WTC11 (cell line): ENCODE measurements at regions of chr19 and their contacts with region 1.

Region 1: DNA sequence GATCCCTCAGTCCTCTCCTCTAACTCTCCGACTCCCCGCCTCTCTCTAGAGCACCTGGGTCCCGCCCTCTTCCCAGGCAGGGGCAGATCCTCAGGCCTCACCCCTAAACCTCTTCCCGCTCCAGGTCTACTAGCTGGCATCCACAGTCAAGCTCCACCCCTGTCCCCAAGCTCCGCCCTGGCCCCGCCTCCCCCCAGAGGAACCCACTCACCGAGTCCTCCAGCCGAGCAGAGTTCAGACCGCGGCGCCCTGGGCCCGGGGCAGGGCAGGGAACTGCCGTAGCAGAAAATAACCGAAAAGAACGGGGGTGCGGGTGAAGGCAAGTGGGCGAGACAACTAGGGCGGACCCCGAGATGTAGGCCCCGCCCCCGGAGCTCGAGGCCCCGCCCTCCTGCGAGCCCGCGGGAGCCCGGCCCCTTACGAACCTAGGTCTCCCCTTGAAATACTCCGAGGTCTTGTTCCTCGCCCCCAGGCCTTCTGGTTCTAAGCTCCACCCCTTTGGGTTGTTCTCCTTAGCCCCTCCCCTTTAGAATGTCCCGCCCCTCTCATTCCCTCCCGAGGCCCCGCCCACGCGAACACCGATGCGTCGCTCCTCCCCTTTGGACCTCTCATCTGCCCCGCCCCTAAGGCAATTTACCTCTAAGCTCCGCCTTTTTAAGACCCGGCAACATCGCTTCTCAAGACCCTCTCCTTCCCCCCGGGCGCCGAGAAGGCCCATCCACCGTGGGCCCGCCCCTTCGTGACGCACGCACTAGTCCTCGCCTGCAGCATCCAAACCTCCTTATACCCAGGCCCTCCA is at the start of gene GGN:
- DNase-seq: peak; percentile 98
- ATAC-seq: peak; percentile 77
- H3K4me3 Mint-ChIP-seq: peak within 1 kb of the TSS; percentile 85
- H3K27ac Mint-ChIP-seq: peak within 1 kb of the TSS; percentile 97
- H3K4me1 Mint-ChIP-seq: peaks cover 28% of the 10 kb centered on the region
- H3K27me3 Mint-ChIP-seq: peaks cover 3% of the 10 kb centered on the region; the same call in 1 of the 2 replicates
- CTCF ChIP-seq: no peak
- total RNA-seq, gene GGN: 2.4 to 3.1 TPM (median 2.7 TPM) in 3 replicates

Region 2: GRCh38 chr19:38224014-38224862 is 163.5 kb before region 1 on chr19 and contains the start of gene DPF1:
- CTCF ChIA-PET with region 1: interaction called, 13 read pairs
- POLR2A ChIA-PET with region 1: no interaction called
- DNase-seq: peak; percentile 92
- ATAC-seq: peak; percentile 83
- H3K4me3 Mint-ChIP-seq: peak within 1 kb of the TSS; percentile 80
- H3K27ac Mint-ChIP-seq: peak within 1 kb of the TSS; percentile 50
- H3K4me1 Mint-ChIP-seq: peaks cover 25% of the 10 kb centered on the region
- H3K27me3 Mint-ChIP-seq: peaks cover 15% of the 10 kb centered on the region
- CTCF ChIP-seq: no peak
- total RNA-seq, gene DPF1: 5.2 to 6.8 TPM (median 5.9 TPM) in 3 replicates

Region 3: DNA sequence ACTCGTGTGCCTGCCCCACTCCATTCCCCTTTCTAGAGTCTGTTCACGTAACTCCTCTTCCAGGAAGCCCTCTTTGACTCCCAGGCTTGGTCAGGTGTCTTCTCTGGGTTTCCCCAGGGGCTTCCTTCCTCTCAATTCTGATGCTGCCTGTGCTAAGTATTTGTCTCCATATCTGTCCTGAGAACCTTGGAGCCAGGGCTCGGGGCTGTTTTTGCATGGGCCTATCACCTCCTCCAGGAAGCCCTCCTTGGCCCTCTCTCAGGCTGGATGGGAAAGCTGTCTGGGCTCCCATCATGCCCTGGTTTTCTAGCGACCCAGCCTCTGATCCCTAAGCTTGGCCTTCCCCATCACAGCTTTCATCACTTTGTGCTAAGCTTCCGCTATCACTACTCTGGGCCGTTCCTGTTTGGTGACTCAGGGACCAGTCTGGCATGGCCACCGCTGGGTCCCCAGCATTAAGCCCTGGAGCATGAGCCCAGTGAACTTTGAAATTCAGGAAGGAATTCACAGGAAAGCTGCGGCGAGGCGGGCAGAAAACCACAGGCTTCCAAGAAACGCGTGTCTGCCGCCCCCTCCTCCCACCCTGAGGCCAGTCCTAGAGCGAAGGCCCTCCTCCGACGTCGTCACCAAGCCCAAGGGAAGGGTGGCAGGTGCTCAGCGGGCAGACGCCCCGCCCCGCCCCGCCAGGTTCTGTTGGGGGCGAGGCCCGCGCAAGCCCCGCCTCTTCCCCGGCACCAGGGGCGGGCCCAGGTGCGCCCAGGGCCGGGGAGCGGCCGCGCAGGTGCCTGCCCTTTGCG is 123.9 kb before region 1 on chr19:
- CTCF ChIA-PET with region 1: interaction called, 13 read pairs
- POLR2A ChIA-PET with region 1: interaction called, 3 read pairs
- DNase-seq: peak; percentile 97
- ATAC-seq: peak; percentile 89
- H3K4me3 Mint-ChIP-seq: peak overlapping the region; percentile 63
- H3K27ac Mint-ChIP-seq: peak overlapping the region; percentile 97
- H3K4me1 Mint-ChIP-seq: peaks cover 51% of the 10 kb centered on the region
- H3K27me3 Mint-ChIP-seq: no peaks in the 10 kb centered on the region
- CTCF ChIP-seq: no peak

Region 4: DNA sequence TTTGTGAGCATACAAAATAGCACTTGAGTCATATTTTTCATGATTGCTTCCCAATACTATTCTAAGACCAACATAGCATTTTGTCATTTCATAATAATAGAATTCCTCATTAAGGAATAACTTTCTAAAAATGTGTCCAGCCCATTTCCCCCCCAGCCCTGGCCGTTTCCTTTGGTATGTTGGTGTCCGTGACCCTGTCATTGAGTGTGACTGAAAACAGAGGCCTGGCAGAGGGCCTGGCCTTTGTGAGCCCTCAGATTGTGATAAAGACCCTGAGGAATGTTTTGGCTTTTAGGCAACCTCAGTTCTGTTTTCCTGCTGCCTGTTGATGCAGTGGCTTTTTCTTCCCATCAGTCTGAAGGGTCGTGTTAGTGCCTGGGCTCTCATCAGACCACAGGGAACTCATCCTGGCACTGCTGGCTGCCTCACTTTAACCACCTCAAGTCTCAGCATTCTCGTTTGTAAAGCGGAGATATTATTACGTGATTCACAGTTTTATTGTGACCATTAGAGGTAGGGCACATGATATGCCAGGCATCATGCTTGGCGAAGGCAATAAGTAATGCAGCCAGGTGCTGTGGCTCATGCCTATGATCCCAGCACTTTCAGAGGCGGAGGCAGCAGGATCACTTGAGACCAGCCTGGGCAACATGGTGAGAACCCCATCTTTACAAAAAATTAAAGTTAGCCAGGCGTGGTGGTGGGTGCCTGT is 109.6 kb before region 1 on chr19:
- CTCF ChIA-PET with region 1: no interaction called
- POLR2A ChIA-PET with region 1: no interaction called
- DNase-seq: no peak
- ATAC-seq: no peak
- H3K4me3 Mint-ChIP-seq: no peak overlapping the region
- H3K27ac Mint-ChIP-seq: peak overlapping the region; percentile 49; the same call in 1 of the 2 replicates
- H3K4me1 Mint-ChIP-seq: peaks cover 10% of the 10 kb centered on the region; the same call in 1 of the 2 replicates
- H3K27me3 Mint-ChIP-seq: no peaks in the 10 kb centered on the region
- CTCF ChIP-seq: no peak

Region 5: GRCh38 chr19:38298821-38299567 is 88.8 kb before region 1 on chr19:
- CTCF ChIA-PET with region 1: no interaction called
- POLR2A ChIA-PET with region 1: no interaction called
- DNase-seq: no peak
- ATAC-seq: no peak
- H3K4me3 Mint-ChIP-seq: no peak overlapping the region
- H3K27ac Mint-ChIP-seq: no peak overlapping the region
- H3K4me1 Mint-ChIP-seq: peaks cover 18% of the 10 kb centered on the region
- H3K27me3 Mint-ChIP-seq: peaks cover 4% of the 10 kb centered on the region
- CTCF ChIP-seq: no peak

Region 6: GRCh38 chr19:38374429-38375176 is 13.1 kb before region 1 on chr19 and contains the start of gene PSMD8:
- CTCF ChIA-PET with region 1: interaction called, 94 read pairs
- POLR2A ChIA-PET with region 1: interaction called, 27 read pairs
- DNase-seq: peak; percentile 99
- ATAC-seq: peak; percentile 99
- H3K4me3 Mint-ChIP-seq: peak within 1 kb of the TSS; percentile 100
- H3K27ac Mint-ChIP-seq: peak within 1 kb of the TSS; percentile 75
- H3K4me1 Mint-ChIP-seq: peaks cover 14% of the 10 kb centered on the region
- H3K27me3 Mint-ChIP-seq: peaks cover 25% of the 10 kb centered on the region
- CTCF ChIP-seq: no peak
- total RNA-seq, gene PSMD8: 156 to 167 TPM (median 160 TPM) in 3 replicates

Region 7: GRCh38 chr19:38527466-38528136 is 139.9 kb after region 1 on chr19:
- CTCF ChIA-PET with region 1: no interaction called
- POLR2A ChIA-PET with region 1: no interaction called
- DNase-seq: peak; percentile 86
- ATAC-seq: peak; percentile 93
- H3K4me3 Mint-ChIP-seq: no peak overlapping the region
- H3K27ac Mint-ChIP-seq: peak overlapping the region; percentile 49; the same call in 1 of the 2 replicates
- H3K4me1 Mint-ChIP-seq: 0 out of 2 replicates have a peak, but pooled peaks cover 2% of the 10 kb centered on the region
- H3K27me3 Mint-ChIP-seq: no peaks in the 10 kb centered on the region
- CTCF ChIP-seq: no peak